CD8-positive, alpha-beta T cell (primary cell): ENCODE measurements at regions of chr2 and their contacts with region 1.

Region 1: DNA sequence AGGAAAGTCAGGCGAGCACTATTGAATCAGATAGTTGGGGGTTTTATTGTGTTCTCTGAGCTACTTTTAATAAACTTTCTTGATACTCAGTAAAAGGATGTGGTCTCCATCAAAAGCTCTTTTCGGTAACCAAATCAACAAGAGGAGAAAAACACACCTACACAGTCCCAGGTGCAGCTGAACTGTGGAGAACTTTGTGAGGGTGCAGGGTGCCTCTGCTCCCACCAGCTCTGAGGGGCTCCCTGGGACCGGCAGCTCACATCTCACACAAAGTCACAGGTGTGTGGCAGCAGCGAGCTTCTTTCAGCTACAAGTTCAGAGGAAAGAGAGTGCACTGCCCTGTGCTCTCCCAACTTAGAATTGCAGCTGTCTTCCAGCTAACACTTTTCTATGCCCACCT is 650.4 kb downstream of the RNF144A start:
- DNase-seq: peak; percentile 35 to 88 (median 66)
- ATAC-seq: peak; percentile 92
- H3K4me3 ChIP-seq: no peak overlapping the region
- H3K4me3 Mint-ChIP-seq: peak overlapping the region; percentile 32
- H3K27ac ChIP-seq: peak overlapping the region; percentile 34 to 53
- H3K27ac Mint-ChIP-seq: peak overlapping the region; percentile 87
- H3K4me1 ChIP-seq: peaks cover 61% of the 10 kb centered on the region
- H3K4me1 Mint-ChIP-seq: peaks cover 71% of the 10 kb centered on the region
- H3K27me3 ChIP-seq: no peaks in the 10 kb centered on the region
- H3K27me3 Mint-ChIP-seq: no peaks in the 10 kb centered on the region
- CTCF ChIP-seq: no peak

Region 2: GRCh38 chr2:7517088-7517487 is 50.6 kb before region 1 on chr2:
- CTCF ChIA-PET with region 1: interaction called, 7 read pairs
- POLR2A ChIA-PET with region 1: interaction called, 9 read pairs
- intact Hi-C with region 1: loop called (anchors 2 to 5 kb)
- DNase-seq: peak in 8 of 9 experiments; percentile 4 to 83 (median 50)
- ATAC-seq: peak; percentile 95
- H3K4me3 ChIP-seq: peak overlapping the region in 1 of 2 experiments; percentile 23
- H3K4me3 Mint-ChIP-seq: peak overlapping the region; percentile 69
- H3K27ac ChIP-seq: peak overlapping the region; percentile 44 to 61
- H3K27ac Mint-ChIP-seq: peak overlapping the region; percentile 93
- H3K4me1 ChIP-seq: peaks cover 48% of the 10 kb centered on the region
- H3K4me1 Mint-ChIP-seq: peaks cover 58% of the 10 kb centered on the region
- H3K27me3 ChIP-seq: no peaks in the 10 kb centered on the region
- H3K27me3 Mint-ChIP-seq: no peaks in the 10 kb centered on the region
- CTCF ChIP-seq: no peak

Region 3: DNA sequence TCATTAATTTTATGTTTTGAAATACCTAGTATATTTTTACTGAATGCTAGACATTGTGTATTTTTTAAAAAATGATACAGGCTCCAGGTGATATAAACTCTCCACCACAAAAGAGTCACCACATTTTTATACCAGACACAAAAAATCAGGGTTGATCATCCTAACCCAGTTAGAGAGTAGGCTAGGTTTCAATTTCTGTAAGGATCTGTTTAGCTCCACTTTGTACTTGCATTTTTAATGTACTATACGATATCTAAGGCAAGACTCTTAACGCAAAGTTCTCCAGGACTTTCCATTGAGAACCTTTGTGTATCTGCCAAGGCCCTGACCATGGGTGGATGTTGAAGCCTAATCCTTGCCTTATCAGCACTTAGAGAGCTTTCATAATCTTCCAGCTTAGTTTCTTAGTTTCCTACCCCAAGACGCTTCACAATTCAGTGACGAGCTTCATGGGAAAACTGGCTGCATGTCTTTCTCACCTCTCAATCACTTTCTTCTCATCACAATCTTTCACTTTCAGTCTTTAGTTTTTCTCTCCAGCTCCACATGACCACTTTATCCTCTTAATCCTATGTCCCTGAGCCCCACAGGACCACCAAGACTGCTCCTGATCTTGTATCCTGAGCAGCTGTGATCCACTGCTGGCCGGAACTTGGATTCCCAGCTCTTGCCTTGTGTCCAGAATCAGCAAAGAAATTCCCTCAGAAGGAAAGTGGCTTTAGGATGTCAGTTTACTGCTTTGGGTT is 14.6 kb before region 1 on chr2:
- CTCF ChIA-PET with region 1: interaction called, 7 read pairs
- POLR2A ChIA-PET with region 1: interaction called, 5 read pairs
- intact Hi-C with region 1: loop called in 1 of 2 experiments (anchors 2 kb)
- DNase-seq: no peak
- ATAC-seq: no peak
- H3K4me3 ChIP-seq: no peak overlapping the region
- H3K4me3 Mint-ChIP-seq: peak overlapping the region; percentile 38
- H3K27ac ChIP-seq: no peak overlapping the region
- H3K27ac Mint-ChIP-seq: peak overlapping the region; percentile 42
- H3K4me1 ChIP-seq: peaks cover 8% of the 10 kb centered on the region
- H3K4me1 Mint-ChIP-seq: peaks cover 22% of the 10 kb centered on the region
- H3K27me3 ChIP-seq: no peaks in the 10 kb centered on the region
- H3K27me3 Mint-ChIP-seq: no peaks in the 10 kb centered on the region
- CTCF ChIP-seq: no peak

Region 4: GRCh38 chr2:7593360-7593759 is 25.7 kb after region 1 on chr2:
- CTCF ChIA-PET with region 1: interaction called, 10 read pairs
- POLR2A ChIA-PET with region 1: interaction called, 5 read pairs
- intact Hi-C with region 1: no loop called
- DNase-seq: no peak
- ATAC-seq: no peak
- H3K4me3 ChIP-seq: no peak overlapping the region
- H3K4me3 Mint-ChIP-seq: no peak overlapping the region
- H3K27ac ChIP-seq: no peak overlapping the region
- H3K27ac Mint-ChIP-seq: no peak overlapping the region
- H3K4me1 ChIP-seq: peaks cover 7% of the 10 kb centered on the region
- H3K4me1 Mint-ChIP-seq: peaks cover 13% of the 10 kb centered on the region
- H3K27me3 ChIP-seq: no peaks in the 10 kb centered on the region
- H3K27me3 Mint-ChIP-seq: no peaks in the 10 kb centered on the region
- CTCF ChIP-seq: no peak

Region 5: DNA sequence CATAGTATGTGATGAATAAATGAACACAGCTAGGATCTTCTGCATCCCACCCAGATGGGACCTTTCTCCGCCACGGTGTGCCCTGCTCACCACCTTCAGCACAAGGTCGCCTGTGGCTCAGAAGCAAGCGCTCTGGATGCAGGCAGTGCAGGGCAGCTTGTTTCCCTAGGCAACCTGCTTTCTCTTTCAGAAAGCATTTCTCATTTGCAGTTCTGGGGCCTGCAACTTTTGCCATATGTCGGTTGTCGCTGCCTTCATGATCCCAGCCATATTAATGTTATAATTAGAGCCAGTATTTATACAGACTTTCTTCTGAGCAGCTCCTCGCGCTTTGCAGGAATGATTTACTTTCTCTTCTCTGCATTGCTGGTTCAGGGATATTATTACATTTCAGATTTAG is 42.3 kb after region 1 on chr2:
- CTCF ChIA-PET with region 1: no interaction called
- POLR2A ChIA-PET with region 1: no interaction called
- intact Hi-C with region 1: no loop called
- DNase-seq: peak in 1 of 9 experiments; percentile 16
- ATAC-seq: no peak
- H3K4me3 ChIP-seq: no peak overlapping the region
- H3K4me3 Mint-ChIP-seq: no peak overlapping the region
- H3K27ac ChIP-seq: no peak overlapping the region
- H3K27ac Mint-ChIP-seq: peak overlapping the region; percentile 1
- H3K4me1 ChIP-seq: peaks cover 19% of the 10 kb centered on the region
- H3K4me1 Mint-ChIP-seq: peaks cover 15% of the 10 kb centered on the region
- H3K27me3 ChIP-seq: no peaks in the 10 kb centered on the region
- H3K27me3 Mint-ChIP-seq: no peaks in the 10 kb centered on the region
- CTCF ChIP-seq: no peak

Region 6: GRCh38 chr2:7725171-7725849 is 157.7 kb after region 1 on chr2:
- CTCF ChIA-PET with region 1: interaction called, 11 read pairs
- POLR2A ChIA-PET with region 1: interaction called, 33 read pairs
- intact Hi-C with region 1: loop called in 1 of 2 experiments (anchors 1 kb)
- DNase-seq: peak in 7 of 9 experiments; percentile 18 to 91 (median 32)
- ATAC-seq: peak; percentile 79
- H3K4me3 ChIP-seq: peak overlapping the region; percentile 48 to 58
- H3K4me3 Mint-ChIP-seq: peak overlapping the region; percentile 90
- H3K27ac ChIP-seq: peak overlapping the region; percentile 6 to 77
- H3K27ac Mint-ChIP-seq: peak overlapping the region; percentile 94
- H3K4me1 ChIP-seq: peaks cover 29% of the 10 kb centered on the region
- H3K4me1 Mint-ChIP-seq: peaks cover 70% of the 10 kb centered on the region
- H3K27me3 ChIP-seq: no peaks in the 10 kb centered on the region
- H3K27me3 Mint-ChIP-seq: no peaks in the 10 kb centered on the region
- CTCF ChIP-seq: no peak

Region 7: GRCh38 chr2:8456151-8456845 is 888.7 kb after region 1 on chr2:
- CTCF ChIA-PET with region 1: no interaction called
- POLR2A ChIA-PET with region 1: no interaction called
- intact Hi-C with region 1: loop called in 1 of 2 experiments (anchors 10 kb)
- DNase-seq: peak in 7 of 9 experiments; percentile 32 to 77 (median 59)
- ATAC-seq: peak; percentile 70
- H3K4me3 ChIP-seq: peak overlapping the region; percentile 36 to 40
- H3K4me3 Mint-ChIP-seq: peak overlapping the region; percentile 86
- H3K27ac ChIP-seq: peak overlapping the region in 1 of 2 experiments; percentile 80
- H3K27ac Mint-ChIP-seq: peak overlapping the region; percentile 86
- H3K4me1 ChIP-seq: peaks cover 20% of the 10 kb centered on the region
- H3K4me1 Mint-ChIP-seq: peaks cover 29% of the 10 kb centered on the region
- H3K27me3 ChIP-seq: no peaks in the 10 kb centered on the region
- H3K27me3 Mint-ChIP-seq: peaks cover 16% of the 10 kb centered on the region
- CTCF ChIP-seq: no peak